MCF 10A (cell line): ENCODE measurements at regions of chr9 and their contacts with region 1.

Region 1: GRCh38 chr9:6827439-6827838 is 69.7 kb downstream of the KDM4C start:
- DNase-seq: peak; percentile 65
- H3K4me3 Mint-ChIP-seq: no peak overlapping the region
- H3K27ac Mint-ChIP-seq: no peak overlapping the region
- H3K4me1 Mint-ChIP-seq: no peaks in the 10 kb centered on the region
- H3K27me3 Mint-ChIP-seq: no peaks in the 10 kb centered on the region
- CTCF ChIP-seq: peak; percentile 53

Region 2: DNA sequence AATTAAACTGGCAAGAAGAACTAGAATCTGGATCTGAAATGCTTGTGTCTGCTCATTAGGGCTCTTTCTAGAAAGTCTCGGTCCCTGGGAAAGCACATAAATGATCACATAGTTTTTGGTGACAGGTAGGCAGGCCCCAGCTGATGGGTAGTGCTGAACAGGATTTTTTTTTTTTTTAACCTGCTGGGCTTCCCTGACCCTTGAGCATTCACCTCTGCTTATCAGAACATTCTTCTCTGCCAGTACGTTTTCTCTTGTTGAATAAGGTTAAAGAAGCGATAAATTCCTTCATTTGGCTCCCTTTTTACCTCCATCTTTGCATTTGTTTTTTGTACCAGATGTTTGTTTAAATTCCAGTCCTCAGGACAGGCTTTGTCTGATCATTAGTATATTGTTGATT is 60.8 kb before region 1 on chr9:
- CTCF ChIA-PET with region 1: no interaction called
- POLR2A ChIA-PET with region 1: no interaction called
- intact Hi-C with region 1: no loop called
- DNase-seq: no peak
- H3K4me3 Mint-ChIP-seq: no peak overlapping the region
- H3K27ac Mint-ChIP-seq: no peak overlapping the region
- H3K4me1 Mint-ChIP-seq: peaks cover 14% of the 10 kb centered on the region
- H3K27me3 Mint-ChIP-seq: no peaks in the 10 kb centered on the region
- CTCF ChIP-seq: no peak

Region 3: GRCh38 chr9:6811436-6811835 is 16.0 kb before region 1 on chr9:
- CTCF ChIA-PET with region 1: interaction called, 29 read pairs
- POLR2A ChIA-PET with region 1: interaction called, 3 read pairs
- intact Hi-C with region 1: no loop called
- DNase-seq: no peak
- H3K4me3 Mint-ChIP-seq: no peak overlapping the region
- H3K27ac Mint-ChIP-seq: no peak overlapping the region
- H3K4me1 Mint-ChIP-seq: no peaks in the 10 kb centered on the region
- H3K27me3 Mint-ChIP-seq: no peaks in the 10 kb centered on the region
- CTCF ChIP-seq: no peak

Region 4: GRCh38 chr9:6845880-6846279 is 18.4 kb after region 1 on chr9:
- CTCF ChIA-PET with region 1: interaction called, 25 read pairs
- POLR2A ChIA-PET with region 1: no interaction called
- intact Hi-C with region 1: no loop called
- DNase-seq: no peak
- H3K4me3 Mint-ChIP-seq: no peak overlapping the region
- H3K27ac Mint-ChIP-seq: no peak overlapping the region
- H3K4me1 Mint-ChIP-seq: no peaks in the 10 kb centered on the region
- H3K27me3 Mint-ChIP-seq: no peaks in the 10 kb centered on the region
- CTCF ChIP-seq: no peak

Region 5: DNA sequence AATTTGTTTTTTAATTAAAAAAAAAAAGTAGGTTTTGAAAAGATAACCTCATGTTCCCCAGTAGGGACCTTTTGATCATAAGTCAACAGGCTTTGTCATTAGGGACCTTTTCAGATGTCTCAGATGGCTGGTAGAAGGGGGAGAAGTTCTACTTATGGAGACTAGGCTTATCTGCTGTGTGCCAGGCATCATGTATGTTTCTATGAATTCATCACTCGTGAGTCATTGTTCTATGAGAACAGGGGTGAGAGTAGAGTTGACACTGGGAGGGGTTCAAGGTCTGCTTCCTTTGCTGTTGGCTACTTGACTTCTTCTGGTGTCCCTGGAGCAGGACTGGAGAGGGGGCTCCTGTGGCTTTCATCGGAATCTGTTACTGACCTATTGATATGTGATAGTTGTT is 69.1 kb after region 1 on chr9:
- CTCF ChIA-PET with region 1: interaction called, 7 read pairs
- POLR2A ChIA-PET with region 1: no interaction called
- intact Hi-C with region 1: loop called (anchors 5 kb)
- DNase-seq: peak; percentile 22
- H3K4me3 Mint-ChIP-seq: no peak overlapping the region
- H3K27ac Mint-ChIP-seq: no peak overlapping the region
- H3K4me1 Mint-ChIP-seq: peaks cover 11% of the 10 kb centered on the region
- H3K27me3 Mint-ChIP-seq: no peaks in the 10 kb centered on the region
- CTCF ChIP-seq: no peak

Region 6: DNA sequence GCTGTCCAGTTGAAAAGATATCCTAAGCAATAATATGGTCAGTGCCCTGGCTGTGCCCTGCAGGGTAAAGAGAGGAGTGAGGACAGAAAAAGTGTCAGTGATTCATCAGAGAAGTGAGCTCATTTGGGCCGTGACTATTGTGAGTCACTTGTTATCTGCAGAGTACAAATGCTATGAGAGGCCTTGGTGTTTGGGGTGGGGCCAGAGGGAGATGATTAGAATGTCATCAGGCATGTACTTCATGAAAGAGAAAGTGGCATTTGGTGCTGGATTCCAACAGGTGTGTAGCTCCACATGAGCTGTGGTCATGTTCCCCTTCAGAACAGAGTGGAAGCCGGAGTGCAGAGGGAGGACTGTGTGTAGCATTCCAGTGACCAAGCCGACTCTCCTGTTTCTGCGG is 104.5 kb after region 1 on chr9:
- CTCF ChIA-PET with region 1: interaction called, 15 read pairs
- POLR2A ChIA-PET with region 1: no interaction called
- intact Hi-C with region 1: no loop called
- DNase-seq: peak; percentile 85
- H3K4me3 Mint-ChIP-seq: peak overlapping the region; percentile 20
- H3K27ac Mint-ChIP-seq: peak overlapping the region; percentile 47
- H3K4me1 Mint-ChIP-seq: peaks cover 23% of the 10 kb centered on the region
- H3K27me3 Mint-ChIP-seq: no peaks in the 10 kb centered on the region
- CTCF ChIP-seq: no peak

Region 7: GRCh38 chr9:6969805-6970204 is 142.4 kb after region 1 on chr9:
- CTCF ChIA-PET with region 1: no interaction called
- POLR2A ChIA-PET with region 1: no interaction called
- intact Hi-C with region 1: no loop called
- DNase-seq: no peak
- H3K4me3 Mint-ChIP-seq: no peak overlapping the region
- H3K27ac Mint-ChIP-seq: no peak overlapping the region
- H3K4me1 Mint-ChIP-seq: peaks cover 11% of the 10 kb centered on the region
- H3K27me3 Mint-ChIP-seq: no peaks in the 10 kb centered on the region
- CTCF ChIP-seq: no peak